CD8-positive, alpha-beta T cell (primary cell): ENCODE measurements at regions of chr1 and their contacts with region 1.

Region 1: GRCh38 chr1:44571712-44572571 is 102.3 kb downstream of the TMEM53 start:
- DNase-seq: peak in 3 of 9 experiments; percentile 9 to 58 (median 44)
- ATAC-seq: peak; percentile 40
- H3K4me3 ChIP-seq: no peak overlapping the region
- H3K4me3 Mint-ChIP-seq: no peak overlapping the region
- H3K27ac ChIP-seq: no peak overlapping the region
- H3K27ac Mint-ChIP-seq: no peak overlapping the region
- H3K4me1 ChIP-seq: no peaks in the 10 kb centered on the region
- H3K4me1 Mint-ChIP-seq: no peaks in the 10 kb centered on the region
- H3K27me3 ChIP-seq: no peaks in the 10 kb centered on the region
- H3K27me3 Mint-ChIP-seq: peaks cover 5% of the 10 kb centered on the region
- CTCF ChIP-seq: peak; percentile 62

Region 2: DNA sequence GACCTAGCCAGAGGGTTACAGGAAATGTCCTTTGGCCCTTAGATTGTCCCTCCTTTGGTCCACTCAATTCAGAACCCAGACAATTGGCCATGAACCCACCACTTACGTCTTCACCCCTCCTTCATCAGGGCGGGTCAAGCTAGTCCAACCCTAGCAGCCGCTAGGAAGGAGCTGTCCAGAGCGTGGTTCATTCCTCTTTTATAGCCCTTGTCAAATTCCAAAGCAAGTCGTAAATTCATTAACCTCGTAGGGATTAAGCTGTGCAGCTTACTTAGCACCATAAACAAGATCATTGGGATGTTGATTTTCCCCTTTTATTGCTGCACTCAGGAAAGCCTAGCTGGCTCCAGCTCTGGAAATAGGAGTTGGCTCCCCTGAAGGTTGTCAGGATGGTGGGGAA is 12.2 kb after region 1 on chr1:
- CTCF ChIA-PET with region 1: interaction called, 11 read pairs
- POLR2A ChIA-PET with region 1: no interaction called
- intact Hi-C with region 1: no loop called
- DNase-seq: no peak
- ATAC-seq: no peak
- H3K4me3 ChIP-seq: no peak overlapping the region
- H3K4me3 Mint-ChIP-seq: no peak overlapping the region
- H3K27ac ChIP-seq: no peak overlapping the region
- H3K27ac Mint-ChIP-seq: no peak overlapping the region
- H3K4me1 ChIP-seq: no peaks in the 10 kb centered on the region
- H3K4me1 Mint-ChIP-seq: no peaks in the 10 kb centered on the region
- H3K27me3 ChIP-seq: no peaks in the 10 kb centered on the region
- H3K27me3 Mint-ChIP-seq: no peaks in the 10 kb centered on the region
- CTCF ChIP-seq: no peak